Right ventricle myocardium inferior (tissue), 1 donor: ENCODE measurements at regions of chr2 and their contacts with region 1.

Region 1: DNA sequence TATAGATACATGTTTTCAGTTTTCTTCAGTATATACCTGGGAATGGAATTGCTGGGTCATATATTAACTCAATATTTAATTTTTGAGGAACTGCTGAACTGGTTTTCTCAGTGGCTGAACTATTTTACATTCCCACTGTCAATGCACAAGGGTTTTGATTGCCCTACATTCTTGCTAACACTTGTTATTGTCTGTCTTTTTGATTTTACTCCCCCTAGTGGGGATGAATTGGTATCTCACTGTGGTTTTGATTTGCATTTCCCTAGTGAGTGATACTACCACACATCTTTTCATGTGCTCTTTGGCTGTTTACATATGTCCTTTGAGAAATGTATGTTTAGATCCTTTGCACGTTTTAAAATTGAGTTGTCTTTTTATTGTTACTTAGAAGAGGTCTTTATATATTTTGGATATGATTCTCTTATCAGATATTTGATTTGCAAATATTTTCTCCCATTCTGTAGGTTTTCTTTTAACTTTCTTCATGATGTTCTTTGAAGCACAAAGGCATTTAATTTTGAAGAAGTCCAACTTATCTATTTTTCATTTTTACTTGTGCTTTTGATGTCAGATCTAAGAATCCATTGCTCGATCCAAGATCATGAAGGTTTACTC is 36.2 kb downstream of the ASB1 start:
- DNase-seq: no peak
- ATAC-seq: no peak

Region 2: GRCh38 chr2:238370823-238371372 is 92.0 kb before region 1 on chr2:
- intact Hi-C with region 1: loop called (anchors 1 kb)
- DNase-seq: no peak
- ATAC-seq: peak; percentile 93

Region 3: DNA sequence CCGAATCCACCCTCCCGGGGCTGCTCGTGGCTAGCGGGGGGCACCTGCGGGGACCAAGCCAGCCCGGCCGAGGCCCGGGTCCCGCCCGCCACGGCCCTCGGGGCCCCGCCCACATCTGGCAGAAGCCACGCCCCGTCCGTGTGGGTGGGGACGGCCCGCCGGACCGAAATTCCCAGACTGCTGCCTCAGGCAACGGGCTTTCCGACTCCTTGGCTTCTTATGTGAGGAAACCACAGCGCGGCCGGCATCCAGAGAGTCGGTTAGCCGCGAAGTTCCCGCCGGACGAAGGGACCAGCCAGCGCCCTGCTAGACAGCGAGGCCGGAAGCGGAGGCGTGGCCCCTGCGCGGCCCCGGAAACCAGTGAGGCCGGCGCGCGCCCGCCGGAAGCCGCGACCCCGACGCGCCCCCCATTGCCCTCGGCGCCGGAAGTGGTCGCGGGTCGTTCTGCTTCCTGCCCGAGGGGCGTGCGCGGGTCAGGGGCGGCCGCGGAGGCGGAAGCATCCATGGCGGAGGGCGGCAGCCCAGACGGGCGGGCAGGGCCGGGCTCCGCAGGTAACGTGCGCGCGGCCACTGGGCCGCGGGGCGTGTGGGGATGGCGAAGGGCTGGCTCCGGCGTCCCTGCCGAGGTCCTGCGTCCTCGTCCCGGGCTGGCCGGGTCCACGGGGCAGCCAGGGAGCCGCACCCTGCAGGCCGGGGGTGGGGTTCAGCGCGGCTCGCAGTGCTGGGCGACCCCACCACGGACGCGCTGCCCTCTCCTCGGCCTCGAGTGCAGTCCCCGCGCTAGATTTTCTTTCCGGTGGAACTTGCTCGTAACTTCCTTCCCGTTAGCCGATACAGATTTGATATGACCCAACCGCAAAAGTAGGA is 36.1 kb before region 1 on chr2 and contains the start of gene ASB1:
- intact Hi-C with region 1: no loop called
- DNase-seq: peak; percentile 90
- ATAC-seq: peak; percentile 84
- total RNA-seq, gene ASB1: 57.5 TPM

Region 4: GRCh38 chr2:238438856-238439849 is 23.7 kb before region 1 on chr2:
- intact Hi-C with region 1: loop called (anchors 1 kb)
- DNase-seq: no peak
- ATAC-seq: peak; percentile 66

Region 5: DNA sequence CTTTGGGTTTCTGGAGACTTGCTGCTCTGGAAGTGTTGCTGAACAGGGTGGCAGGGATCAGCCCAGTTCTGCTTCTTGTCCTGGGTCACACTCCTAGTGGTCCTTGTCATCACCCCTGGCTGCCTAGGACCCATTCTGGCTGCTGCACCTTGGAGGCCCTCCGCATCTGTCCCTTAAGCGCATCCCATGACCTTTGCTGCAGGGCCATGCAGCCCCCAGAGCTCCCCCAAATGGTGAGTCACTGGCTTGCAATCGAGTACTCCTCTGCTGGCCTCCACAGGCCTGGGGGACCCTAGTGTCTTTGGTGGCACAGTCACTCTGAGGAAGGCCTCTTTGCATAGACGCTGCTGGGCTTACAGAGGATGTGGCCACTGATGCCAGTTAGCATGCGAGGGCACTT is 152.3 kb after region 1 on chr2:
- intact Hi-C with region 1: no loop called
- DNase-seq: no peak
- ATAC-seq: no peak